Activated CD4-positive, alpha-beta T cell treated with anti-CD3 and anti-CD28 coated beads for 36 hours (primary cell): ENCODE measurements at regions of chr10 and their contacts with region 1.

Region 1: DNA sequence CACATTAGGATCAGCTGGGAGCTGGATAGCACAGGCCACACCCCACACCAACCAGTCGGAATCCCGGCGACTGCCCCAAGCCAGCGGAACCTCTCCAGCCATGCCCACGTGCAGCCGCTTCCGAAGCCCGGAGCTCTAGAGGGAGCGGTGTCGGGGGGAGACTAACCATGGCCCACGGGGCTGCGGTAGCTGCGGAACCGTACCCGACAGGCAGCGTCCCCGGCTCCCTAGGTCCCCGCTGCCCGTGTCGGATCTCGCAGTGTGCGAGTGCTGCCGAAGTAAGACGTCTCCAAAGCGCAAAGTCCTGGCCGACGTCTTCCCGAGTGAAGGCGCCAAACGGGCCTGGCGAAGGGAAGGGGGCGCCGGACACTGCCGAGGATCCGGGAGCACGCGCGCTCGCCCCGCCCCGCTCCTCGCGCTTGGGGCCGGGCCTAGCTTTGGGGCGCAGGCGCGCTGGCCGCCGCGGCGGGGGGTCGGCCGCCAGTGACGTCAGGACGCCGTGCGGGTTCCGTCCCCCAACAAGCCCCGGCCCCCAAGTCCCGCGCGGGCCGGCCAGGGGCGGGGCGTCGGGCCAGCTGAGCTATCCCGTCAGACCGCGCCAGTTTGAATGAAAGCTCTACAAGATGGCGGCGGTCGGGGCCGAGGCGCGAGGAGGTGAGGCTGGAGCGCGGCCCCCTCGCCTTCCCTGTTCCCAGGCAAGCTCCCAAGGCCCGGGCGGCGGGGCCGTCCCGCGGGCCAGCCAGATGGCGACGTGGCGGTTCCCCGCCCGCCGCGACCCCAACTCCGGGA is at the start of gene SUV39H2:
- DNase-seq: peak; percentile 97
- ATAC-seq: peak; percentile 92
- H3K4me3 Mint-ChIP-seq: peak within 1 kb of the TSS; percentile 97
- H3K27ac Mint-ChIP-seq: peak within 1 kb of the TSS; percentile 93
- H3K4me1 Mint-ChIP-seq: peaks cover 37% of the 10 kb centered on the region
- H3K27me3 Mint-ChIP-seq: no peaks in the 10 kb centered on the region
- total RNA-seq, gene SUV39H2: 42.9 to 51.5 TPM

Region 2: DNA sequence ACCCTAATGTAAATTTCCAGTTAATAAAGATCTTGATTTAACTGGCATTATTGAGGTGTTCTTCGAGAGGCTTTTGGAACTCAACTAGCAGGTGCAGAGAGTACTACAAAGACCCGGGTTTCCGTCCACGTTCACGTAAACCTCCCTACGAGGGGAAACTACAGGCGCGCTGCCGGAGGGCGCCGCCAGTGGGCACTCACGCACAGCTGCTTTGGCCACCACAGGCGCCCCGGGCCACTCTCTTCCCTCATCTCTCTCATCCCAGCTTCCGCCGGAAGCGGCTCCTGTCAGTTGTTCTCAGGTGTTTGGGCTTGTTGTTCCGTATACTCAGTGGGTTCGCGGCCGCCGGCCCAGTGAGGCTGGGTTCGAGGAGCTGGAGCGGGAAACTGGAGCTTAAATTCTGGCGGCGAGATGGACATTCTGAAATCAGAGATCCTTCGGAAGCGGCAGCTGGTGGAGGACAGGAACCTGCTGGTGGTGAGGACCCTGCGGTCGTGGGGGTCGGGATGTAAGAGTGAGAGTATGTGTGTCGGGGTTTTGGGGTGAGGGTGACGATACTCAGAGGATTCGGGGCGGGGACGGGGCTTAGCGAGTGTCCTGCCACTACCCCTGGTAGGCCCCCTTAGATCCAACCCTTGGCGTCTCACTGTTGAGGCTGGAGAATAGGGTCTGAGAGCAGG is 1291.6 kb before region 1 on chr10 and contains the start of gene PRPF18:
- CTCF ChIA-PET with region 1: no interaction called
- POLR2A ChIA-PET with region 1: no interaction called
- intact Hi-C with region 1: loop called in 1 of 2 experiments (anchors 5 kb)
- DNase-seq: peak; percentile 97
- ATAC-seq: peak; percentile 100
- H3K4me3 Mint-ChIP-seq: peak within 1 kb of the TSS; percentile 99
- H3K27ac Mint-ChIP-seq: peak within 1 kb of the TSS; percentile 95
- H3K4me1 Mint-ChIP-seq: peaks cover 29% of the 10 kb centered on the region
- H3K27me3 Mint-ChIP-seq: peaks cover 8% of the 10 kb centered on the region
- total RNA-seq, gene PRPF18: 21.0 to 22.1 TPM

Region 3: DNA sequence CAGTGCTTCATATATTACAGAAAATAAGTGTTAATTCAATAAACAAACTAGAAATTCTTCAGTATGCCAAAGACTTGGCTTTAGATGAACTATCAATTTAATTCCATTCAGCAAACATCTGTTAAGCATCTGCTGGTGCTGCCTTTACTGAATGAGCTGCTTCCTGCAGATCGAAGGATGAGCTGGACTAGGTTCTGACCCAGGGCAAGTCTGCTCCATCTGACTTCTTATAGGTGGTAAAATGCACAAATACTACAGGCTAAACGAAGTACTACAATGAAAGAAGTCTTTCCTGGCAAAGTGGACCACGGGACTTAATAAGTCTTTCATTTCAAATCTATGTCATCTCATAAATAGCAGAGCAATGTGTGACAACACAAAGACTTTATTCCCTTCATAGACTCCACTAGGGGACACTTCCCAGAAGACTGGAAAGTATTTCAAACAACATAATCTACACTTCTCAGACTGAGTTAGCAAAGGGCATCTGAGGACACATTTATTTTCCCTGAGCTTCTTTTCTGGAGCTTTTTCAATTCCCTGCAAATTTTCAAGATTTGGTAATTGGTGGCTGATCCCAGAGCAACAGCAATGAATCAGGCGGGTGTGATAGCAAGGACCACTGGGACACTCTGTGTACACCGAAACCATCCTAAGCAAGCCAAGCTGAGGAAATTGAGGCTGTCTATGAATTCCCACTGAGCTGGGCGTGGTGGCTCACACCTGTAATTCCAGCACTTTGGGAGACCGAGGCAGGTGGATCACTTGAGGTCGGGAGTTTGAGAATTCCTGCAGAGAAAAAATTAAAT is 438.8 kb before region 1 on chr10:
- CTCF ChIA-PET with region 1: no interaction called
- POLR2A ChIA-PET with region 1: no interaction called
- intact Hi-C with region 1: no loop called
- DNase-seq: no peak
- ATAC-seq: no peak
- H3K4me3 Mint-ChIP-seq: no peak overlapping the region
- H3K27ac Mint-ChIP-seq: no peak overlapping the region
- H3K4me1 Mint-ChIP-seq: no peaks in the 10 kb centered on the region
- H3K27me3 Mint-ChIP-seq: peaks cover 11% of the 10 kb centered on the region

Region 4: GRCh38 chr10:14588084-14588937 is 290.1 kb before region 1 on chr10:
- CTCF ChIA-PET with region 1: interaction called, 3 read pairs
- POLR2A ChIA-PET with region 1: interaction called, 3 read pairs
- intact Hi-C with region 1: loop called in 1 of 2 experiments (anchors 5 kb)
- DNase-seq: peak; percentile 77
- ATAC-seq: peak; percentile 70
- H3K4me3 Mint-ChIP-seq: peak overlapping the region; percentile 40
- H3K27ac Mint-ChIP-seq: peak overlapping the region; percentile 89
- H3K4me1 Mint-ChIP-seq: peaks cover 93% of the 10 kb centered on the region
- H3K27me3 Mint-ChIP-seq: no peaks in the 10 kb centered on the region

Region 5: DNA sequence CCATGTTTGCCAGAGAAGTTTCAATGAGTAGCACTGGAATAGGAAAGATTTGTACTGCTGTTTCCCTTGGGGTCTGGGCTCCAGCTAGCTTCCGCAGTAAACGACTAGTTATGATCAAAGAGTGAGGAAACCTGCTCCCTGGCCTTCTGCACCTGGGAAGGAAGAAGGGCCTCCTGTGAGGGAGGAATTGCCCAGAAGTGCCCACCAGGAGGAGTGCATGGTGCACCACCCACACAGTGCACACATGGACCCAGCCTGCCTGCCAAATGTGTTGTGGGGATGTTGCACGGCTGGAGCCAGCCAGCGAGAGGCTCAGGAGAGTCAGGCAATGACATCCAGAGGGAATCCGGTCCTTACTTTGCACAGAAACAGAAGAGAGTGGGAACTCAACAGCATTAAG is 76.7 kb before region 1 on chr10:
- CTCF ChIA-PET with region 1: no interaction called
- POLR2A ChIA-PET with region 1: no interaction called
- intact Hi-C with region 1: no loop called
- DNase-seq: no peak
- ATAC-seq: no peak
- H3K4me3 Mint-ChIP-seq: no peak overlapping the region
- H3K27ac Mint-ChIP-seq: no peak overlapping the region
- H3K4me1 Mint-ChIP-seq: no peaks in the 10 kb centered on the region
- H3K27me3 Mint-ChIP-seq: no peaks in the 10 kb centered on the region

Region 6: GRCh38 chr10:14954001-14954770 is 75.7 kb after region 1 on chr10 and contains the start of gene DCLRE1C:
- CTCF ChIA-PET with region 1: interaction called, 3 read pairs
- POLR2A ChIA-PET with region 1: interaction called, 4 read pairs
- intact Hi-C with region 1: loop called (anchors 1 kb)
- DNase-seq: peak; percentile 94
- ATAC-seq: peak; percentile 94
- H3K4me3 Mint-ChIP-seq: peak within 1 kb of the TSS; percentile 90
- H3K27ac Mint-ChIP-seq: peak within 1 kb of the TSS; percentile 97
- H3K4me1 Mint-ChIP-seq: peaks cover 52% of the 10 kb centered on the region
- H3K27me3 Mint-ChIP-seq: no peaks in the 10 kb centered on the region
- total RNA-seq, gene DCLRE1C: 17.9 to 30.9 TPM

Region 7: DNA sequence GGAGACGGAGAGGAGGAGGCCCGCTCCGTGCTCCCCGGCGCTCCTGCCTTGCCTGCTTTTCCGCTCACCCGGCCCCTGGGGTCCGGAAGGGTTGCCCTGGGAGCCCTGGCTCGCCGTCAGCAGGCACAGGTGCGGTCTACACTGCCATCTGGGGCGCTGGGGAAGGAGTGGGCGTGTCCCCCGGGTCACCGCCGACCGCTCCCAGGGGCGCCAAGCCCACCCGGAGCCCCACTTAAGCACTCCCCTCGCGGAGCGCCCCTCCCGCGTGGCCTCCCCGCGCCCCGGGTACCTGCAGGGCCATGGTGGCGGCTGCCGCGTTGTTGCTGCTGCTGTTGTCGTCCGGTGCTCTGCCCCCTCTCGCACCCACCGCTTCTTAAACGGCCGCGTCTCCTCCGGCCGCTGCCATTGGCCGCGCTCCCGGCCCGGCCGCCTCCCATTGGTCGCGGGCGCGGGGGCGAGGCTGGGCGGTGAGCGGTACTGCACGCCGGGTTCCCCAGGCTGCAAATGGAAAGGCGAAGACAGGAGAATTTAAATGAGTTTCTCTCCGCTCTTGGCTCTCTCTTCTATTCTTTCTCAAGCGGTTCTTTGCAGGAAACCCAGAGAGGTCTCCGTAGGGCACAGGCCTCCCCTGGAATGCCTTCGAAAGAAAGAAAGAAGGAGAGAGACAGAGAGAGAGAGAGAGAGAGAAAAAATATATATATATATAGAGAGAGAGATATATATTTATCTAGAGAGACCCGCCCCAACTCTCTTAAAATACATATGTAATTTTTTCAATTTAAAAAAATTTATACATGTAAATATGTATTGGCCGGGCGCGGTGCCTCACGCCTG is 210.2 kb after region 1 on chr10 and contains the start of gene ACBD7:
- CTCF ChIA-PET with region 1: no interaction called
- POLR2A ChIA-PET with region 1: no interaction called
- intact Hi-C with region 1: loop called in 1 of 2 experiments (anchors 1 kb)
- DNase-seq: peak; percentile 91
- ATAC-seq: peak; percentile 91
- H3K4me3 Mint-ChIP-seq: peak within 1 kb of the TSS; percentile 67
- H3K27ac Mint-ChIP-seq: no peak within 1 kb of the TSS
- H3K4me1 Mint-ChIP-seq: peaks cover 19% of the 10 kb centered on the region
- H3K27me3 Mint-ChIP-seq: no peaks in the 10 kb centered on the region
- total RNA-seq, gene ACBD7: 2.4 to 2.6 TPM

Region 8: DNA sequence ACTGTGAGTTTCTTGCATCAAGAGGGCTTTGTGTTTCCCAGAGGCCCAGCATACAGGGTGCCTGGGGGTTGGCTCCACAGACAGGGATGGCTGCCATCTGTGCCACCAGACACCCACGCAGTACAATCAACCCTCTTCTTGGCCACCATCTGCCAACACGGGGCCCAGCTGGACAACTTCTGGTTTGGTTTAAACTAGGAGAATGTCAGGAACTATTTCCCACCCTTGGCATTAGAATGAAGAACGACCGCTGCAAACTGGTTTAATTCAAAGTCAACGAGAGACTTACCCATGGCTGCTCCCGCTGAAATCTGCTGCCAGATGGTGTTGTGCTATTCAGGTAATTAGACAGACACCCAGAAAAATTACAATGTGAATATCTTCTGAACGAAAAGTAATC is 262.2 kb after region 1 on chr10:
- CTCF ChIA-PET with region 1: no interaction called
- POLR2A ChIA-PET with region 1: no interaction called
- intact Hi-C with region 1: no loop called
- DNase-seq: no peak
- ATAC-seq: no peak
- H3K4me3 Mint-ChIP-seq: no peak overlapping the region
- H3K27ac Mint-ChIP-seq: peak overlapping the region; percentile 83
- H3K4me1 Mint-ChIP-seq: peaks cover 44% of the 10 kb centered on the region
- H3K27me3 Mint-ChIP-seq: no peaks in the 10 kb centered on the region